ENCODE measurements at regions of chr1 and their contacts with region 1.

Region 1: DNA sequence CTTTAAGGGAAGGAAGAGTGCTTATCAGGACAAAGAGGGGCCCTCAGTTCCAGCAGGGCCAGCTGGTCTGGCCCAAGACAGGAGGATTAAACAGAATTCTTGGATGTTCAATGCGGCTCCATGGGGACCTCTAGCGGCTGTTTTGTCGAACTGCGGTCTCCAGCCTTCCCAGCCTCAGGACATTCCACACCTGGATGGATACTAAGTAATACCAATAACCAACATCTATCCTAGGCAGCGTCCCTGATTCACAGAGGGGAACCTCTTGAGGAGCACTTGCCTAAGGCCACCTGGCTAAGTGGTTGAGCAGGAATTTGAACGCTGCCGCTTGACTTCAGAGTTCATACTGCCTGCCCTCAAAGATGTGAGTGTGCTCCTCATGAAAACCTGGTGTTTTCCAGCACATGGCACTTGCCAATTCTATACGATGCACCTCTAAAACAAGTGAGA is 15.5 kb upstream of the CD247 start:
- DNase-seq: peak; percentile 90
- H3K4me3 Mint-ChIP-seq: no peak overlapping the region
- H3K27ac Mint-ChIP-seq: no peak overlapping the region
- H3K4me1 Mint-ChIP-seq: peaks cover 5% of the 10 kb centered on the region
- H3K27me3 Mint-ChIP-seq: no peaks in the 10 kb centered on the region
- CTCF ChIP-seq: peak; percentile 97

Region 2: DNA sequence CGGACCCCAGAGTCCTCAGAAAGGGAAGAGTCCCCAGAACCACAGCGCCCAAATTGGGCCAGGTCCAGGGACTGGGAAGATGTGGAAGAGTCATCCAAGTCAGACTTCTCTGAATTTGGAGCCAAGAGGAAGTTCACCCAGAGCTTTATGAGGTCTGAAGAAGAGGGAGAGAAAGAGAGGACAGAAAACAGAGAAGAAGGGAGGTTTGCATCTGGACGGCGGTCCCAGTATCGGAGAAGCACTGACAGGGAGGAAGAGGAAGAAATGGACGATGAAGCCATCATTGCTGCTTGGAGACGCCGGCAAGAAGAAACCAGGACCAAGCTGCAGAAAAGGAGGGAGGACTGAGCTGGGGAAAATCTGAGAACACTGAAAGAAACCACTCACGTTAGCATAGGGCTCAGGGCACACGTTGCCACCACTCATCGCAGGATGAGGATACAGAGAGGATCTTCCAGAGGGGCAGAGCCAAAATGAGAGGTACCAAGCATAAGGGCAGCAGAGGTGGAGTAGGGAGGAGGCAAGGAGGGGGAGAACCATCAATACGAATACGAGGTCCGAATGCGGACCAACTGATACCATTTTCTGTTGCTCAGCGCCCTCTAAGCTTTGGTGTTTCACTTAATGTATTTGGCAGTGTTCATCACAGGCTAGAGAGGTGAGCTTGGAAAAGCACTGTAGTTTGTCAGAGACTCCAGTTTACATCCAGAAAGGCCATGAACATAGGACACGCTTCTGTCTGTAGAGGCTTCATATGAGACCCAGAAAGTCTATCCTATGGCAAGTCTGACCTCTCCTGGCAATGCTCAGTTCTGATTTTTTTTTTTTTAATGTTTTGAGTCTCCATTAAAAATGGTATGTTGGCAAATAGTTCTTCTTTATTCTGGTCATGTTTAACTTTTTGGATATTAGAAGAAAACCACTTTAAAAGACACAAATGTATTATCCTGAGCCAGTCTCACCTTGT is 405.3 kb before region 1 on chr1:
- CTCF ChIA-PET with region 1: interaction called, 3 read pairs
- POLR2A ChIA-PET with region 1: no interaction called
- intact Hi-C with region 1: loop called (anchors 2 kb)
- DNase-seq: peak; percentile 31
- H3K4me3 Mint-ChIP-seq: no peak overlapping the region
- H3K27ac Mint-ChIP-seq: no peak overlapping the region
- H3K4me1 Mint-ChIP-seq: no peaks in the 10 kb centered on the region
- H3K27me3 Mint-ChIP-seq: peaks cover 33% of the 10 kb centered on the region
- CTCF ChIP-seq: peak; percentile 43

Region 3: DNA sequence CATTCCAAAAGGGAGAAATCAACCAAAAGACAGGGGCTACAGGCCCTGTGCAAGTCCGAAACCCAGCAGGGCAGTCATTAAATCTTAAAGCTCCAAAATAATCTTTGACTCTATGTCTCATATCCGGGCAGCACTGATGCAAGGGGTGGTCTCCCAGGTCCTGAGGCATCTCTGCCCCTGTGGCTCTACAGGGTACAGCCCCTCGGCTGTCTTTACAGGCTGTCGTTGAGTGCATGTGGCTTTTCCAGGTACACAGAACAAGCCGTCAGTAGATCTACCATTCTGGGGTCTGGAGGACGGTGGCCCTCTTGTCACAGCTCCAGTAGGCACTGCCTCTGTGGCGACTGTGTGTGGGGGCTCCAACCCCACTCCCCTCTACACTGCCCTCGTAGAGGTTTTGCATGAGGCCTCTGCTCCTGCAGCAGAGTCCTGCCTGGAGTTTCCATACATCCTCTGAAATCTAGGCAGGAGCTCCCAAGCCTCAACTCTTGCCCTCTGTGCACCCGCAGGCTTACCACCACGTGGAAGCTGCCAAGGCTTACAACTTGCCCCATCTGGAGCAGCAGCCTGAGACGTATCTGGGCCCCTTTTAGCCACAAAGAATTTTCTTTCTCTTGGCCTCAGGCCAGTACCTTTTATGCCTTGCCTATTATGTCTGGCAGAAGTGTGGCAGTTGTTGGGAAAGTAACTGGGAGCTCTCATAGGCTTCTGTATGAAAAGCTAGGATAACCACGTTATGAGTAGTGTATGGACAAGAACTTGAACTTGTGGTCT is 260.7 kb before region 1 on chr1:
- CTCF ChIA-PET with region 1: interaction called, 90 read pairs
- POLR2A ChIA-PET with region 1: interaction called, 10 read pairs
- intact Hi-C with region 1: loop called (anchors 1 kb)
- DNase-seq: peak; percentile 86
- H3K4me3 Mint-ChIP-seq: no peak overlapping the region
- H3K27ac Mint-ChIP-seq: peak overlapping the region; percentile 23
- H3K4me1 Mint-ChIP-seq: peaks cover 42% of the 10 kb centered on the region
- H3K27me3 Mint-ChIP-seq: no peaks in the 10 kb centered on the region
- CTCF ChIP-seq: no peak

Region 4: DNA sequence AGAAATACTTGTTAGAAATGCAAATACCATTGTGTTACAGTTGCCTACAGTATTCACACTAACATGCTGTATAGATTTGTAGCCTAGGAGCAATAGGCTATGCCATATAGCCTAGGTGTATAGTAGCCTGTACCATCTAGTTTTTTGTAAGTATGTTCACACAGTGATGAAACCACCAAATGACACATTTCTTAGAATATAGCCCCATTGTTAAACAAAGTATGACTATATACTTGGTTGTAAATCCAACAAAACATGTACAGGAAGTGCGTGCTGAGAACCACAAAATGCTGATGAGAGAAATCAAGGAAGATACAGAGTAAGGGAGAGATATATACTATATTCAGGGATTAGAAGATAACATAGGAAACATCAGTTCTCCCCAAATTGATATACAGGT is 221.0 kb before region 1 on chr1:
- CTCF ChIA-PET with region 1: no interaction called
- POLR2A ChIA-PET with region 1: no interaction called
- intact Hi-C with region 1: no loop called
- DNase-seq: no peak
- H3K4me3 Mint-ChIP-seq: no peak overlapping the region
- H3K27ac Mint-ChIP-seq: no peak overlapping the region
- H3K4me1 Mint-ChIP-seq: peaks cover 10% of the 10 kb centered on the region
- H3K27me3 Mint-ChIP-seq: no peaks in the 10 kb centered on the region
- CTCF ChIP-seq: no peak

Region 5: DNA sequence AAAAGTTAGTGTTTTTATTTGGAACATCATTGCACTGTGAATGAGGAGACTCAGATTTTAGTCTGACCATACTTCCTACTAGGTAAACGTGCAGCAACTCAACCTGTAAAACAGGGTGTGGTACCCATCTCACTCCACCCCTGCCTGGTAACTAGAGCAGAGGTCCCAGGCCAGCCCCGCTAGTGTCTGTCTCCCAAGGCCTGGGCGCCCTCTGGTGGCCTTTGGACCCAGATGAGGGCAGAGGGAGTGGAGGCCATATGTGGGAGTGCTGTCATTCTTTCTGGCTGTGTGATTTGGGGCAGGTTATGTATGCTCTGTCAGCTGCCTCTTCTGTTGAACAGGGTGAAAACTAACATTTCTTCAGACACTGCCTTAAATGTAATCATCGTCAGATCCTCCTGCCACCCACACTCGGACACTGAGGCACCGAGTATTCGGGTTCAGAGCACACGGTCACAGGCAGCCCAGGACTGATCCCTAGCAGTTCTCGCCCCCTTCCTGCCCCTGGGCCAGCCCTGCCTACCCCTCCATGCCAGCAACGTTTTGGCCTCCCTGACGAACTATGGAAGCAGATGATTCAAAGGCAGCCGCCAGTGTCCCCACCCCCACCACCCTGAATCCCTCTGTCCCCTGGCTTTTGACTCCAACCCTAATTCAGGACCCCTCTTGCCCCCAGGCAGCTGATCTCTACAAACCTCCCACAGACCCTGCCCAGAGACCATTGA is 91.6 kb before region 1 on chr1:
- CTCF ChIA-PET with region 1: interaction called, 51 read pairs
- POLR2A ChIA-PET with region 1: interaction called, 4 read pairs
- intact Hi-C with region 1: loop called (anchors 1 kb)
- DNase-seq: peak; percentile 94
- H3K4me3 Mint-ChIP-seq: no peak overlapping the region
- H3K27ac Mint-ChIP-seq: no peak overlapping the region
- H3K4me1 Mint-ChIP-seq: peaks cover 6% of the 10 kb centered on the region
- H3K27me3 Mint-ChIP-seq: peaks cover 18% of the 10 kb centered on the region
- CTCF ChIP-seq: peak; percentile 98

Region 6: GRCh38 chr1:167460836-167461235 is 73.0 kb before region 1 on chr1:
- CTCF ChIA-PET with region 1: interaction called, 46 read pairs
- POLR2A ChIA-PET with region 1: interaction called, 13 read pairs
- intact Hi-C with region 1: no loop called
- DNase-seq: no peak
- H3K4me3 Mint-ChIP-seq: no peak overlapping the region
- H3K27ac Mint-ChIP-seq: no peak overlapping the region
- H3K4me1 Mint-ChIP-seq: no peaks in the 10 kb centered on the region
- H3K27me3 Mint-ChIP-seq: no peaks in the 10 kb centered on the region
- CTCF ChIP-seq: no peak

Region 7: DNA sequence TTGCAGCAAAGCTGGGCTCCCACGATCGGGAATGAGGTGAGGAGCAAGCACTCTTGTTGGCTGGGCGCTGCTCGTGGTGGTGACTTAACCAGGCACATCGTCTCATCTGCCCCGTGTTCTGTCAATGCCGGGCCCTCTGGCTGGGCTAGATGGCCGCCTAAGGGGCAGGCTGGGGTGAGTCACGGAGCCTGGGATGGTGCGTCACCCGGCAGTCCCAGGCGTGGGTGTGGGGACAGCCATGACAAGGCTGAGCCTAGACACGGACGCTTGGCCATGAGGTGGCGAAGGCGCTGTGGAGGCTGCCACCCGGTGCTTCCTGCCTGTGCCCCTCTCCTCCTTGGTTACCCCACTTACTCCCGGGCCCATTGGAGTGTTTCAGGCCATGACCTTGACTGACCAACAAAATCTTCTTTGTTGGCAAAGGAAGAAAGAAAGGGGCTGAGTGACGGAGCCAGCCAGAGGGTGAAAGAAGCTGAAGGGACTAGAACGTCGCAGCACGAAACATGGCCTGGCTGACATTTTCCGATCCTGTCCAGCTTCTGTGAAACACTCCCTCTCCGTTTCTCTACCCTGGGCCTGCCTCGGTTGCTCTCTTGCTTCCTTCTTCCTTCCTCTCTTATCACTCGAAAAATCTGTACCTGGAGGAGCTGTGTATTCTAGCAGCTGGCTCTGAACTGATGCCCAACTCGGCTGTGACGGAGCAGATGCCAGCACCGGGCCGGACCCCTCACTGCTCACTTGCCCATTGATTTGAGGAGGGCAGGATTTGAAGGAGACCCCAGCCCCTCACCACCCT is 16.1 kb before region 1 on chr1:
- CTCF ChIA-PET with region 1: interaction called, 18 read pairs
- POLR2A ChIA-PET with region 1: no interaction called
- intact Hi-C with region 1: loop called (anchors 1 kb)
- DNase-seq: peak; percentile 88
- H3K4me3 Mint-ChIP-seq: no peak overlapping the region
- H3K27ac Mint-ChIP-seq: no peak overlapping the region
- H3K4me1 Mint-ChIP-seq: no peaks in the 10 kb centered on the region
- H3K27me3 Mint-ChIP-seq: no peaks in the 10 kb centered on the region
- CTCF ChIP-seq: no peak

Region 8: DNA sequence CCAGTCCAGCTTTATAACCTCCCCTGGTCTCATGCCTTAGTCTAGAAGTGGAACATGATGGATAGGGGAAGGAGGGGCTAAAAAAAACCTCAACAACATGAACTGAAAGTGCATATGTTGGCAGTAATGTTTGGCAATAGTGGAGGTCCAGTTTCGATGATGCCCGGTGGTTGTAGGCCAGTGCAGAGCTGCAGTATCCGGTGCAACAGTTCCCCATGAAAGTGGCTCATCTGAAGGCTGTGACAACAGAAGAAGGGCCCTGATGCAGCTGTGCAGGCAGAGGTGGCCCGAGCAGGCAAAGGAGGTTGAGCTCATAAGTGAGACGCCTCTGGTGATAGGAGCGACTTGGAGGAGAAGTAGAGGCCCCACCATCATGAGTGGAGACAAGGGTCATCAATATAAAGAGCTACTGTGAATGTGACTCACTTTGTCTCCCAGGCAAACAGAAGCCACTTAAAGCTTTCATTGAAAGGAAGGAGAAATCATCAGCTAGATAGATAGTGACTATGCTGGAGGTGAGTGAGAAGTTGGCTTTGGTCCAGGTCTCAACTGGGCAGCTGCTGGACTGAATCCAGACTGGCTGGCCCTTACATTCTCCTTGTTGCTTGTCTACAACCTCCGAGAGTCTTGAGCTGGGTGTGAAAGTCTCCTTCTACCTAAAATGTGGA is 29.8 kb after region 1 on chr1:
- CTCF ChIA-PET with region 1: interaction called, 69 read pairs
- POLR2A ChIA-PET with region 1: interaction called, 3 read pairs
- intact Hi-C with region 1: no loop called
- DNase-seq: peak; percentile 79
- H3K4me3 Mint-ChIP-seq: peak overlapping the region; percentile 64
- H3K27ac Mint-ChIP-seq: peak overlapping the region; percentile 85
- H3K4me1 Mint-ChIP-seq: peaks cover 46% of the 10 kb centered on the region
- H3K27me3 Mint-ChIP-seq: no peaks in the 10 kb centered on the region
- CTCF ChIP-seq: no peak